ENCODE measurements at regions of chr21 and their contacts with region 1.

Region 1: DNA sequence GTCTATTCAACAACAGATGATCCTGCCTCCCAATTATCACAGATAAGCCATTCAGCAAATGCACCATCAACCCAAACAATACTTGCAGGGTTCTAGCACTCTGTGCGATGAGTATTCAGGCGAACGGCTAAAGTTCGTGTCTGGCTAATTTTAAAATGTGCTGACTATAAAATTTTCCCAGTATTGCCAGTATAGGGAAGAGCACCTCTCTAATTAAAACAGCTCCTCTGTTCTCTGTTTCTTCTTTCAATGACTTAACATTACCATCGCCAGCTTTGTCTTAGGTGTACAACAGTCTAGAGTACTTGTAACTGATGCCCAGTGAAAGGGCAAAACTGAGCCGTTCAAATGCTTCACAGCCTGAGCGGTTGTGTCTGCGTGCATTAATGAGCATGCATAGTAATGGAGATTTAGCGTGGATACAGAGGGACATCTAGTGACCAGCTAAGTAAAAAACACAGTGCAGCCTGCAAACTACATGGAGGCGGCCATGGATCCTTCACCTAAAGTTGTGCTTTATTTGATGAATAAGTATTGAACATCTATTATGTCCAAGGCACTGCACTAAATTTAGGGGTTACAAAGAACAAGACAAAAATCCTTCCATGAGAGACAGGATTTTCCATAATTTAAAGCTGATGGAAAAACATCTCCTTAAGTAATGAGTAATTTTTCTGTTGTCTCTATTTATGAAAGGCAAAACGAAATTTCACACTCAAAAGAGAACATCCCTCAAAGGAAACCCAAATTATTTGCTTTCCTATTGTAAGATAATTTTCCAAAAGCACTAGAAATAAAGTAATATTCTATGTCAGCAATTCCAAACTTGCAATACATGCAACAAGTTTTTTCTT is 120.0 kb downstream of the SETD4 start:
- DNase-seq: peak; percentile 76
- H3K4me3 ChIP-seq: no peak overlapping the region
- H3K27ac ChIP-seq: no peak overlapping the region
- H3K4me1 ChIP-seq: no peaks in the 10 kb centered on the region
- H3K27me3 ChIP-seq: no peaks in the 10 kb centered on the region
- CTCF ChIP-seq: peak; percentile 57 to 64
- POLR2A ChIP-seq: no peak

Region 2: DNA sequence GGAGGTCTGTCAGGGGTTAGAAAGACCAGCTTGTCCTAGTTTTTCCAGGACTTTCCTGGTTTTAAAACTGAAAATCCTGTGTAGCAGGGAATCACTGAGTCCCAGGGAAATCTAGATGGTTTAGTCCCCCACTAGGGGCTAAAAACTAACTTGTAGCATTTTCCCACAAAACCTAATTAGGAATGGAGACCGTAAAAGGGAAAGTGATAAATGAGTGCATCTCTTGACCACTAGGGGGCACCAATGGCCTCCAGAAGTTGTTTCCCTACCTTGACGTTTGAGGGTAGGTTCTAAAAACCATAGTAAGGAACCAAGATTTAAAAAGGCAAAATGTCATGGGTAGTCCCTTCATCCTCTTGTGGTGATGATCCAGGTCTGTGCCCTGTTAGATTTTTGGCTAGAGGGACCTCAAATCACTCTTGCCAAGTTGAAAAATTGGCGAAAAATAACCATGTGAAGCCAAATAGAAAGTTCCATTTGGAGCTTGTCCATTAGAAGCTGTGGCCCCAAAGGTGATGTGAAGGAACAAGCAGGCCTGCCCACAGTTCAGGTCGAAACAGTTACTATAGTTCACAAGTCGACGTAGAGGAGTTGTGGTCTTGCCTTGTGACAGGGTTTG is 1247.0 kb before region 1 on chr21:
- CTCF ChIA-PET with region 1: interaction called, 26 read pairs
- POLR2A ChIA-PET with region 1: no interaction called
- dilution Hi-C with region 1: no loop called
- intact Hi-C with region 1: loop called (anchors 1 kb)
- DNase-seq: peak; percentile 57
- H3K4me3 ChIP-seq: no peak overlapping the region
- H3K27ac ChIP-seq: no peak overlapping the region
- H3K4me1 ChIP-seq: no peaks in the 10 kb centered on the region
- H3K27me3 ChIP-seq: peaks cover 14 to 30% of the 10 kb centered on the region in 2 experiments
- CTCF ChIP-seq: peak; percentile 79 to 81
- POLR2A ChIP-seq: no peak

Region 3: DNA sequence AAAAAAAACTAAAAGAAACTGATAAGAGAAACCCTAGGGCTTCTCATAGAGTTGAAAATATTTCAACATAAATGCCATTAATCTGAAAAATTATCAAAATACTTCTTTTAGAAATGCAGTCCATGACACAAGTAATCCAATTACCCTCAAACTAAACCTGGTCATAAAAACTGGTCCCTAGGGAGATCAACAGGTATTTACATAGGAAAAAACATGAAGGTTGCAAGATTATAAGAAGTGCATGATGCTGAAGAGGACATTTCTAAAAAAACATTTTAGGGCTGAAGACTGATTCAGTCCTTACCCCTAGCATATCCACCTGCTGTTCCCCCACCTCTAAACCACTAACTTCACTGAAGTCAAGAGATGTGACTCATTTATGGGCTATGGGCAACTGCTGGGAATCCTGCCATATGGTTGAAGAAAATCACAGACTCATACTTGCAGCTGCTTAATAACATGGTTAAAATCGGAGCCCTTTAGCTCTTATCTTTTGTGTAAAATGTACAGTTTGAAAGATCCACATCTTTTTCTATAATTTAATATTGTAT is 760.2 kb before region 1 on chr21:
- CTCF ChIA-PET with region 1: no interaction called
- POLR2A ChIA-PET with region 1: no interaction called
- dilution Hi-C with region 1: no loop called
- intact Hi-C with region 1: no loop called
- DNase-seq: no peak
- H3K4me3 ChIP-seq: no peak overlapping the region
- H3K27ac ChIP-seq: no peak overlapping the region
- H3K4me1 ChIP-seq: no peaks in the 10 kb centered on the region
- H3K27me3 ChIP-seq: peaks cover 0 to 2% of the 10 kb centered on the region in 2 experiments
- CTCF ChIP-seq: no peak
- POLR2A ChIP-seq: no peak

Region 4: GRCh38 chr21:35840197-35840799 is 100.0 kb before region 1 on chr21:
- CTCF ChIA-PET with region 1: interaction called, 37 read pairs
- POLR2A ChIA-PET with region 1: no interaction called
- dilution Hi-C with region 1: no loop called
- intact Hi-C with region 1: no loop called
- DNase-seq: peak; percentile 78
- H3K4me3 ChIP-seq: no peak overlapping the region
- H3K27ac ChIP-seq: no peak overlapping the region
- H3K4me1 ChIP-seq: no peaks in the 10 kb centered on the region
- H3K27me3 ChIP-seq: peaks cover 0 to 2% of the 10 kb centered on the region in 2 experiments
- CTCF ChIP-seq: peak; percentile 65 to 71
- POLR2A ChIP-seq: no peak

Region 5: GRCh38 chr21:36028127-36029069 is 88.1 kb after region 1 on chr21:
- CTCF ChIA-PET with region 1: interaction called, 3 read pairs
- POLR2A ChIA-PET with region 1: no interaction called
- dilution Hi-C with region 1: no loop called
- intact Hi-C with region 1: loop called (anchors 5 kb)
- DNase-seq: peak; percentile 73
- H3K4me3 ChIP-seq: no peak overlapping the region
- H3K27ac ChIP-seq: no peak overlapping the region
- H3K4me1 ChIP-seq: no peaks in the 10 kb centered on the region
- H3K27me3 ChIP-seq: peaks cover 0 to 2% of the 10 kb centered on the region in 2 experiments
- CTCF ChIP-seq: peak; percentile 90 to 92
- POLR2A ChIP-seq: no peak

Region 6: GRCh38 chr21:36113647-36114428 is 173.5 kb after region 1 on chr21:
- CTCF ChIA-PET with region 1: no interaction called
- POLR2A ChIA-PET with region 1: no interaction called
- dilution Hi-C with region 1: no loop called
- intact Hi-C with region 1: loop called (anchors 5 kb)
- DNase-seq: no peak
- H3K4me3 ChIP-seq: no peak overlapping the region
- H3K27ac ChIP-seq: no peak overlapping the region
- H3K4me1 ChIP-seq: no peaks in the 10 kb centered on the region
- H3K27me3 ChIP-seq: peaks cover 8 to 9% of the 10 kb centered on the region in 2 experiments
- CTCF ChIP-seq: no peak
- POLR2A ChIP-seq: no peak

Region 7: DNA sequence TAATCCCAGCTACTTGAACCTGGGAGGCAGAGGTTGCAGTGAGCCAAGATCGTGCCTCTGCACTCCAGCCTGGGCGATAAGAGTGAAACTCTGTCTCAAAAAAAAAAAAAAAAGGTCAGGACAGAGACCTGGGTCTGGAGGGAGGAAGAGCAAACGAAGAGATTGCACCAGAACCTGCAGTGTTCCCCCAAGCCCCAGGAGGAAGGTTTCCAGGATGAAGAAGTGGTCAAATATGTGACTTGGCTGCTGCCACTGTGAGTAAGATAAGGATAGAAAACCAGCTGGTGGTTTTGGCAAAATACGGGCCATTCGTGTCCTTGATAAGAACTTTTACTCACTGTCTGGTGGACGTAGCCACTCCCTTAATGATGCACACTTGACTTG is 497.4 kb after region 1 on chr21:
- CTCF ChIA-PET with region 1: no interaction called
- POLR2A ChIA-PET with region 1: no interaction called
- dilution Hi-C with region 1: no loop called
- intact Hi-C with region 1: no loop called
- DNase-seq: peak; percentile 74
- H3K4me3 ChIP-seq: no peak overlapping the region
- H3K27ac ChIP-seq: peak overlapping the region; percentile 47
- H3K4me1 ChIP-seq: peaks cover 28% of the 10 kb centered on the region
- H3K27me3 ChIP-seq: no peaks in the 10 kb centered on the region
- CTCF ChIP-seq: no peak
- POLR2A ChIP-seq: peak; percentile 55